Breast epithelium (tissue), 4 donors: ENCODE measurements at regions of chr17 and their contacts with region 1.

Region 1: GRCh38 chr17:81926247-81927144 is 1.0 kb downstream of the MAFG start:
- DNase-seq: peak; percentile 63 to 81
- H3K4me3 ChIP-seq: peak overlapping the region; percentile 94 to 100 (median 98)
- H3K27ac ChIP-seq: peak overlapping the region; percentile 94 to 98
- H3K4me1 ChIP-seq: peaks cover 11 to 12% of the 10 kb centered on the region in 2 donors
- H3K27me3 ChIP-seq: no peaks in the 10 kb centered on the region
- CTCF ChIP-seq: no peak
- POLR2A ChIP-seq: no peak

Region 2: DNA sequence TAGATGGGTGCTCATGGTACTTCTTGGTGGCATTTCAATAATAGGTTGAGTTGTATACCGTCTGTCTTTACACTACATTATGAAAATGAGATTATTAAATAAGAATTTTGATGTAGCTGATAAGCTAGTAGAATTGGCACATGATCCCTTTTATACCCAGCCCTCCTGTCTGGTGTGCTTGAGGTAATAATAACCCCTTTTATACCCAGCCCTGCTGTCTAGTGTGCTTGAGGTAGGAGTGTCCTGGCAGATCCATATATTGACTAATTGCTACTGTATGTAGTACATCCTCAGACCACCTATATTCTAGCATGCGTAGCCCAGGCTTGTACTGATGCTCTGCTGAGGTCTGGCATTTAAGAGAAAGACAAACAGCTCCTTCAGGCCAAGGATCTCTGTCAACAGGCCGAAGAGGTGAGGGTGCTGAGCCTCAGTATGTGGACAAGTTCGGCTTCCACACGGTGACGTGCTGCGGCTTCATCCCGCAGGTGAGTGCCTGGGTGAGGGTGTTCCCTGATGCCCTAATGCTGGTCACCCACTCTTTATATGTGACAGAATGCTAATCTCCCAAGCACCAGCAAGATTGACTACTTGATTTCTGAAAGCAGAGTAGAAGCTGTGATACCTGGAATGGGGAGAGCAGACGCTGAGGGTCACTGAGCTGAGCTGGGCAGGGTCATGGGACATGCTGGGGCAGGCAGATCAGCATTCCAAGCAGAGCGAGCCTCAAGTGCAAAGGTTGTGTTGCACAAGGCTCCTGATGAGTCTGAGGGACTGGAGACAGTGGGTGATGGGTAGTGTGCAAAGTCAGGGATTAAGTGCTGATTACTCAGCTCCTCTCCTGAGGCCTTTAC is 814.6 kb after region 1 on chr17:
- intact Hi-C with region 1: loop called (anchors 5 kb)
- DNase-seq: no peak
- H3K4me3 ChIP-seq: no peak overlapping the region
- H3K27ac ChIP-seq: no peak overlapping the region
- H3K4me1 ChIP-seq: peaks cover 0 to 7% of the 10 kb centered on the region in 2 donors
- H3K27me3 ChIP-seq: no peaks in the 10 kb centered on the region
- CTCF ChIP-seq: no peak
- POLR2A ChIP-seq: no peak